ENCODE measurements at regions of chr1 and their contacts with region 1.

Region 1: DNA sequence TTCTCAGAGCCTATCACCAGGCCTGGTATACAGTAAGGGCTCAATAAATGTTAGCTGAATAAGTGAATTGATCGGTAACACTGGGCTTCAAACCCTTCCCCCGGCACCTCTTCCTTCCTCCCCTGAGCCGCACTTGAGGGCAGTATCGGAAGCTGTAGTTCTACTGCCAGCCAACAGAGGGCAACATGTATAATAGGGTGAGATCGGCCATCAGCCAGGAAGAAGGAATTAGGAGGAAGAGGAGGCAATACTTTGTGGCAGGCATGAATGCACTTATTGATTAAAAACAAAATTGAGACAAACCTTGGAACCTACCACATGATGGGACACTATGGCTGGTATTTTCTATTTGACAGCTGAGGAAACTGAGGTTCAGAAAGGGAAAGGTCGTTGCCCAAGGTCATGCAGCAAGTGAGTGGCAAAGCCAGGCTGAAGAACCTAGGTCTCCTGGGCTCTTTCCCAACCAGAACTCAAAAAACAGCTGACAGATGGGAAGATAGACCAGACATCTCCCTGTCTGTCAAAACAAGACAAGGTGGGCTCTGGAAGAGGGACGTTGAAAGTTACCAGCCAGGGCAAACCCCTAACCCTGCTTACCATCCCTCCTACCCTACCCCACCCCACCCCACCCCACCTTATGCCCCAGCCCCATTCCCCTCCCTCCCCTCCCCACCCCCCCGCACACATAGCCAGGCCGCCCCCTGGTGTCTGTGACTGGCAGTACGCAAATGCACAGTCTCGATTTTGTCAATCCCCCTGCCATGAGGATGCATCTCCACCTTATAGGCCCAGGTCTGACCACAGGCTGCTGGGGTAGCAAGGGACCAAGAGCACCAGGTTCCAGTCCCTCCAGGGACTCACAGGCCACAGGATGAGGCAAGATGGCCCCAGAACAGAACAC is 107.3 kb upstream of the RUNX3 start:
- DNase-seq: peak in 8 of 9 experiments; percentile 59 to 80 (median 70)
- ATAC-seq: peak; percentile 47
- H3K4me3 ChIP-seq: no peak overlapping the region
- H3K4me3 Mint-ChIP-seq: peak overlapping the region; percentile 5
- H3K27ac ChIP-seq: no peak overlapping the region
- H3K27ac Mint-ChIP-seq: no peak overlapping the region
- H3K4me1 ChIP-seq: peaks cover 65% of the 10 kb centered on the region
- H3K4me1 Mint-ChIP-seq: peaks cover 52% of the 10 kb centered on the region
- H3K27me3 ChIP-seq: no peaks in the 10 kb centered on the region
- H3K27me3 Mint-ChIP-seq: no peaks in the 10 kb centered on the region
- CTCF ChIP-seq: peak; percentile 72

Region 2: GRCh38 chr1:24909388-24909898 is 128.0 kb before region 1 on chr1:
- CTCF ChIA-PET with region 1: interaction called, 14 read pairs
- POLR2A ChIA-PET with region 1: interaction called, 3 read pairs
- intact Hi-C with region 1: no loop called
- DNase-seq: peak in 3 of 9 experiments; percentile 13 to 41 (median 28)
- ATAC-seq: no peak
- H3K4me3 ChIP-seq: no peak overlapping the region
- H3K4me3 Mint-ChIP-seq: peak overlapping the region; percentile 5
- H3K27ac ChIP-seq: peak overlapping the region; percentile 24 to 96
- H3K27ac Mint-ChIP-seq: peak overlapping the region; percentile 100
- H3K4me1 ChIP-seq: peaks cover 87% of the 10 kb centered on the region
- H3K4me1 Mint-ChIP-seq: peaks cover 68% of the 10 kb centered on the region
- H3K27me3 ChIP-seq: no peaks in the 10 kb centered on the region
- H3K27me3 Mint-ChIP-seq: no peaks in the 10 kb centered on the region
- CTCF ChIP-seq: no peak

Region 3: DNA sequence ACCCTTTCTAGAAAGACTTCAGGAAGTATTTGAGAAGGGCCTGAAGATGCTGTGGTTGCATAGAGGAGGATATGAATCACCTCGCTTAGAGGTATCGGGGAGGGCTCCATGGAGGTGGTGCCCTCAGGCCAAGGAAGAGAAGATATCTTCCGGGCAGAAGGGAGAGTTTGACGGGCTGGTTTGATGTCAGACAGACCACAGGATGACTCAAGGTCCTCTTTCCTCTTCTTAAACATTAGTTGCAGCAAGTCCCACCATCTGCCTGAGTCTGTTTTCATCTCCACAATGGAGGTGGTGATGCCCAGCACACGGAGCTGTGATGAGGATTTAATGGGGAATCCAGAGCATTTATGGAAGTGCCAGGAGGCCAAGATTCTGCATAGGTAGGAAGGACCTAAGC is 82.3 kb before region 1 on chr1:
- CTCF ChIA-PET with region 1: interaction called, 163 read pairs
- POLR2A ChIA-PET with region 1: interaction called, 3 read pairs
- intact Hi-C with region 1: no loop called
- DNase-seq: peak in 8 of 9 experiments; percentile 56 to 88 (median 72)
- ATAC-seq: peak; percentile 82
- H3K4me3 ChIP-seq: peak overlapping the region in 1 of 2 experiments; percentile 2
- H3K4me3 Mint-ChIP-seq: peak overlapping the region; percentile 37
- H3K27ac ChIP-seq: peak overlapping the region in 1 of 2 experiments; percentile 23
- H3K27ac Mint-ChIP-seq: peak overlapping the region; percentile 93
- H3K4me1 ChIP-seq: peaks cover 76% of the 10 kb centered on the region
- H3K4me1 Mint-ChIP-seq: peaks cover 83% of the 10 kb centered on the region
- H3K27me3 ChIP-seq: no peaks in the 10 kb centered on the region
- H3K27me3 Mint-ChIP-seq: no peaks in the 10 kb centered on the region
- CTCF ChIP-seq: no peak

Region 4: GRCh38 chr1:24978383-24979032 is 58.9 kb before region 1 on chr1:
- CTCF ChIA-PET with region 1: interaction called, 21 read pairs
- POLR2A ChIA-PET with region 1: interaction called, 3 read pairs
- intact Hi-C with region 1: no loop called
- DNase-seq: no peak
- ATAC-seq: no peak
- H3K4me3 ChIP-seq: no peak overlapping the region
- H3K4me3 Mint-ChIP-seq: no peak overlapping the region
- H3K27ac ChIP-seq: no peak overlapping the region
- H3K27ac Mint-ChIP-seq: peak overlapping the region; percentile 55
- H3K4me1 ChIP-seq: peaks cover 64% of the 10 kb centered on the region
- H3K4me1 Mint-ChIP-seq: peaks cover 62% of the 10 kb centered on the region
- H3K27me3 ChIP-seq: peaks cover 0 to 2% of the 10 kb centered on the region in 2 experiments
- H3K27me3 Mint-ChIP-seq: no peaks in the 10 kb centered on the region
- CTCF ChIP-seq: no peak

Region 5: GRCh38 chr1:25006770-25007169 is 30.7 kb before region 1 on chr1:
- CTCF ChIA-PET with region 1: interaction called, 16 read pairs
- POLR2A ChIA-PET with region 1: no interaction called
- intact Hi-C with region 1: no loop called
- DNase-seq: no peak
- ATAC-seq: no peak
- H3K4me3 ChIP-seq: no peak overlapping the region
- H3K4me3 Mint-ChIP-seq: no peak overlapping the region
- H3K27ac ChIP-seq: no peak overlapping the region
- H3K27ac Mint-ChIP-seq: no peak overlapping the region
- H3K4me1 ChIP-seq: peaks cover 67% of the 10 kb centered on the region
- H3K4me1 Mint-ChIP-seq: peaks cover 74% of the 10 kb centered on the region
- H3K27me3 ChIP-seq: no peaks in the 10 kb centered on the region
- H3K27me3 Mint-ChIP-seq: no peaks in the 10 kb centered on the region
- CTCF ChIP-seq: no peak

Region 6: DNA sequence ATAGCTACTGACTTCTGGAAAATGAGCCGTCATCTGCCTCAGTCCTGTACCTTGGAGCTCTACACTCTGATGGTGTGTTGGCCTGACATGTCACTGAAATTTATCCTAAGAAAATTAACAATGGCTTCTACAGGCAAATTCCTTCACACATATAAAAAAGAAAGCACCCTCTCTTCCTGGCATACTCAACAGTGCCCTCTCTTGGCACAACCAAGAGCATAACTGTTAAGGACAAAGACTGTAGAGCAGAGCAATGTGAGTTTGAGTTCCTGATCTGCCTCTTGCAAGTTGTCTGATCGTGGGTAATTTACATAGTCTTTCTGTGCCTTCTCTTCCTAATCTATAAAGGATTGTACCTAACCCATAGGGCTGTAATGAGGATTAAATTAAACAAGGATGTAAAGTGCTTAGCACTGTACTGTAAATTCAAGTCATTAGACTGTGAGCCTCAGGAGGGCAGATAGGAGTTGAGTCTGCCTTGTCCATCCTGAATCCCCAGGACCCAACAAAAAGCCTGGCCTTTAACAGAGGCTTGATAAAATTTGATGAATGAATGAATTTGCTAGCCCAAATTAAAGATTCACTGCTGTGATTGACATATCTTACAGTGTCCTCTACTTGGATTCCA is 111.4 kb after region 1 on chr1:
- CTCF ChIA-PET with region 1: interaction called, 10 read pairs
- POLR2A ChIA-PET with region 1: no interaction called
- intact Hi-C with region 1: loop called in 1 of 2 experiments (anchors 1 kb)
- DNase-seq: peak in 5 of 9 experiments; percentile 29 to 78 (median 34)
- ATAC-seq: peak; percentile 73
- H3K4me3 ChIP-seq: no peak overlapping the region
- H3K4me3 Mint-ChIP-seq: no peak overlapping the region
- H3K27ac ChIP-seq: no peak overlapping the region
- H3K27ac Mint-ChIP-seq: no peak overlapping the region
- H3K4me1 ChIP-seq: no peaks in the 10 kb centered on the region
- H3K4me1 Mint-ChIP-seq: peaks cover 4% of the 10 kb centered on the region
- H3K27me3 ChIP-seq: no peaks in the 10 kb centered on the region
- H3K27me3 Mint-ChIP-seq: peaks cover 13% of the 10 kb centered on the region
- CTCF ChIP-seq: peak; percentile 69